Posterior cingulate gyrus (tissue), 11 donors: ENCODE measurements at regions of chr17 and their contacts with region 1.

Region 1: GRCh38 chr17:81142301-81143199 is 22.8 kb upstream of the PVALEF start:
- DNase-seq: peak in 9 of 10 donors; percentile 72 to 97 (median 85)

Region 2: DNA sequence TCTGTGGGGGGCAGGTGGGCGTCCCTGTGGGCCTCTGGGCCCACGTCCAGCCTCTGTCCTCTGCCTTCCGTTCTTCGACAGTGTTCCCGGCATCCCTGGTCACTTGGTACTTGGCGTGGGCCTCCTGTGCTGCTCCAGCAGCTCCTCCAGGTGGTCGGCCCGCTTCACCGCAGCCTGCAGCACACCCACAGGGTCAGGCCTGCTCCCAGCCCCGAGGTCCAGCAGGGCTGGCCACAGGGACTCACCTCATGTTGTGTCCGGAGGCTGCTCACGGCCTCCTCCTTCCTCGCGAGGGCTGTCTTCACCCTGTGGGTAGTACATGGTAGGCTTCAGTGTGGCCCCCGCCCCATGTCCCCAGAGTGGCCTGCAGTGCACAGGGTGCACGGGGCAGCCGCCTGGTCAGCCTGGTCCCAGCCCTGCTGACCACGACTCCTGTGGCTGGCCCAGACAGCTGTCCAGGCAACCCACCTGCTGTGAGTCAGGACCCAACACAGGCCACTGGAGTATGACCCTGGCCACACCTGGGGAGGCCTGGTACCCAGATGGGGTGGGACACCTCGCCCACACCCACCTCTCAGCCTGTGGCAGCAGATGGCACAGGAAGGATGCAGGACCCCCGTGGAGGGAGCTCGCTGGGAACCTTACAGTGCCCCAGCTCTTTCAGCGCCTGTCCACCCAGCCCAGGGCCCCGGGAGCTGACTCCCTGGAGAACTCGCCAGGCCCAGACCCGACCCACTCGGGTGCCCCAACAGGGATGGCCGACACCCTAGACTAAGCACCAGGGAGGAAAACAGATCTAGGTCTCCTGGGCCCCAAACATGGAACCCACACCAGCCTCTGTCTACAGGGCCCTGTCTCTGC is 47.4 kb after region 1 on chr17:
- intact Hi-C with region 1: loop called (anchors 1 kb)
- DNase-seq: peak in 6 of 10 donors; percentile 34 to 93 (median 40)

Region 3: DNA sequence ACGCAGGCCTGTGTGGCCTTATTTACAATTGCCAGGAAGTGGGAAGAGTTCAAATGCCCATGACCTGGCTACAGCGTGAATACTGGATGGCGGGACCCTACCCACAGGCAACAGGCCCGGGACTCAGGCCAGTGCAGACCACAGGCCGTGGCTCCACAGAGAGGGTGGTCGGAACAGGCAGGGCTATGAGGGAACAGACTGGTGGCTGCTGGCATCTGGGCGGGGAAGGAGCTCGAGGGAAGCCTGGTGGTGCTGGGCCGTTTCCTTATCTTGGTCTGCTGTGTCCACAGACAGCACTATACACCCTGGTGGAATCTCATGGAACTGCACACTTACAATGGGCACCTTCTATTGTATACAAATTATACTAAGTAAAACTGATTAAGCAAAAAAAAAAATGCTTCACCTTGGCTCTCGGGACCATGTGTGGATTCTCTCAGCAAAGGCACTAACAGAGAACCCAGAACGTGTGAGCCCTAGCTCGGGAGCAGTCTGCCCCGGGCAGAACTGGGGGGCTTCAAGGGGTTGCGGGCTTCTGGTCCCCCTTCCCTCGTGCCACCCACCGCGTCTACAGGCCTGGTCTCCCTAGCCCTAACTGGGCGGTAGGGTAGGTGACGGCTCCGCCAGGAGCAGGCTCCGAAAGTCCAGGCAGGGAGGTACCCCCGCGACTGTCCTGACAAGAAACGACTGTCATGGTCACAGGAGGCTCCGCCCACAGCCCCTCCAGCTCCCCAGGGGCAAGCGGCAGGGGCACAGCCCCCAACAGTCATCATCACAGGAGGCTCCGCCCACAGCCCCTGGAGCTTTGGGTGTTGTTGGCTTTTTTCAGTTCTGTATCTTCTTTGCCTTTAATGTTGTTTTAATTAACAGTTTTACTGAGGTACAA is 58.4 kb after region 1 on chr17:
- intact Hi-C with region 1: loop called (anchors 1 kb)
- DNase-seq: peak in 8 of 10 donors; percentile 37 to 94 (median 57)

Region 4: GRCh38 chr17:81217491-81217890 is 74.9 kb after region 1 on chr17:
- intact Hi-C with region 1: no loop called
- DNase-seq: peak in 1 of 10 donors; percentile 77

Region 5: DNA sequence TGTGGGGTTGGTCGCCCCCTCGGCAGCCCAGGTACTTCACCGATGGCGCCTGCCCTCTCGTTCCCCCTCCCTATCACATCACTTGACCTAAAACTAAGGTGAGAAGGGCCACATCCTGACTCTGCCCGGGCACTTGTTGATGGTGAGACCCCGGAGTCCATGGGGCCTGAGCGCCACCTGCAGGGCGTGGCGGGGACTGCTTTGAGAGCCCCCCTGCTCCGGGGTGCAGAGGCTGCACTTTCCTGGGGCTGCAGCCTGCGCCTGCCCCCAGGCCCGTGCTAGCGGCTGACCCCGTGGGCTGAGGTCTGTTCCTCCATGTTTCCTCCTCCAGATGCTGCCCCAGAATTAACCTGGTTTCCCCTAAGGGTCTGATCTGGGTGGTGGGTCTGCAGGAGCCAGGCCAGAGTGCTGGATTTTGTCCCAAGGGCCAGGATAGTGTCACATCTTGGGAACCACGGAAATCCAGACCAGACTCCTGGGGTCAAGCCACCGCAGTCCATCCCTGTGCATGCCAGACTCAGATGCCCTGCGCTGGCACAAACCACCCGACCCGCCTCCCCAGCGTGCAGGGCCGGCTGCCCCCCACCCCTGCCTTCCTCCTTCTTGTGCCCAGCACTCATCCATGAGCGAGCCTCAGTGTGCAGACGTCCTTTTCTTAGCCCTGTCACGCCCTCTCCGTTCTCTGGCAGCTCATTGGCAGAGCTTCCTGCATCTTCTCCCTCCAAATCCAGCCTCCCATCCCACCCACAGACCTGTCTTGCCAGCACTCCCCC is 99.3 kb after region 1 on chr17:
- intact Hi-C with region 1: loop called (anchors 5 kb)
- DNase-seq: peak in 7 of 10 donors; percentile 51 to 94 (median 67)